ENCODE measurements at regions of chr17 and their contacts with region 1.

Region 1: DNA sequence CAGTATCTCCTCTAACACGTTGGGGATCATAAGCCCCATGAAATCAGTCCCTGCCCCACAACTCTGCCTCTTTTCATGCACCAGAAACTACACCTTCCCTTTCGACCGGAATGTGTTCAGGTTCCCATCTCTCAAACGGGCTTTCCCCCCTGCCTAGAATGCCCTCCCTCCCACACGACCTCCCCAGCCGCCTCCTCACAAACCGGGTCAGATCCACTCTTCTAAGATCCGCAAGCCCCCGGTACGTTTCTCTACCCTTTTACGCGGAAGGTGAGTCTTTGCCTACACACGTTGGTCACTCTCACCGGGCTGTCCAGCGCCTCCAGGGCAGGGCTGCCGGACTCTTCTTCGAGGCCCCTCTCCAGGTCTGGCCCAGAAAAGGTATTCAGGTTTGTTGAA is 708 bp downstream of the DHX33 start:
- DNase-seq: peak in 4 of 9 experiments; percentile 9 to 45 (median 18)
- ATAC-seq: peak; percentile 16
- H3K4me3 ChIP-seq: peak overlapping the region; percentile 78 to 84
- H3K4me3 Mint-ChIP-seq: peak overlapping the region; percentile 81
- H3K27ac ChIP-seq: peak overlapping the region; percentile 49 to 53
- H3K27ac Mint-ChIP-seq: peak overlapping the region; percentile 46
- H3K4me1 ChIP-seq: peaks cover 10% of the 10 kb centered on the region
- H3K4me1 Mint-ChIP-seq: peaks cover 31% of the 10 kb centered on the region
- H3K27me3 ChIP-seq: no peaks in the 10 kb centered on the region
- H3K27me3 Mint-ChIP-seq: no peaks in the 10 kb centered on the region
- CTCF ChIP-seq: no peak

Region 2: GRCh38 chr17:5438716-5439445 is 29.2 kb before region 1 on chr17 and contains the start of gene C1QBP:
- CTCF ChIA-PET with region 1: interaction called, 6 read pairs
- POLR2A ChIA-PET with region 1: interaction called, 6 read pairs
- intact Hi-C with region 1: loop called (anchors 1 kb)
- DNase-seq: peak; percentile 87 to 96 (median 91)
- ATAC-seq: peak; percentile 92
- H3K4me3 ChIP-seq: peak within 1 kb of the TSS; percentile 56 to 83
- H3K4me3 Mint-ChIP-seq: peak within 1 kb of the TSS; percentile 81
- H3K27ac ChIP-seq: peak within 1 kb of the TSS; percentile 63 to 86
- H3K27ac Mint-ChIP-seq: peak within 1 kb of the TSS; percentile 93
- H3K4me1 ChIP-seq: peaks cover 30% of the 10 kb centered on the region
- H3K4me1 Mint-ChIP-seq: peaks cover 40% of the 10 kb centered on the region
- H3K27me3 ChIP-seq: no peaks in the 10 kb centered on the region
- H3K27me3 Mint-ChIP-seq: no peaks in the 10 kb centered on the region
- CTCF ChIP-seq: peak; percentile 98
- total RNA-seq, gene C1QBP: 72.0 to 79.9 TPM

Region 3: GRCh38 chr17:5500589-5501391 is 32.7 kb after region 1 on chr17:
- CTCF ChIA-PET with region 1: no interaction called
- POLR2A ChIA-PET with region 1: no interaction called
- intact Hi-C with region 1: loop called in 1 of 2 experiments (anchors 5 kb)
- DNase-seq: peak; percentile 62 to 92 (median 82)
- ATAC-seq: peak; percentile 96
- H3K4me3 ChIP-seq: peak overlapping the region; percentile 65 to 67
- H3K4me3 Mint-ChIP-seq: peak overlapping the region; percentile 97
- H3K27ac ChIP-seq: peak overlapping the region; percentile 47 to 57
- H3K27ac Mint-ChIP-seq: peak overlapping the region; percentile 93
- H3K4me1 ChIP-seq: peaks cover 13% of the 10 kb centered on the region
- H3K4me1 Mint-ChIP-seq: peaks cover 20% of the 10 kb centered on the region
- H3K27me3 ChIP-seq: no peaks in the 10 kb centered on the region
- H3K27me3 Mint-ChIP-seq: no peaks in the 10 kb centered on the region
- CTCF ChIP-seq: no peak

Measured in CD8-positive, alpha-beta T cell (primary cell).